ENCODE measurements at regions of chr1 and their contacts with region 1.

Region 1: GRCh38 chr1:174953285-174954072 is 46.3 kb upstream of the CACYBP start:
- DNase-seq: peak; percentile 69 to 76
- H3K4me3 ChIP-seq: peak overlapping the region; percentile 13; the same call in 1 of the 2 replicates
- H3K4me3 Mint-ChIP-seq: peak overlapping the region; percentile 41
- H3K27ac Mint-ChIP-seq: peak overlapping the region; percentile 0
- H3K4me1 ChIP-seq: peaks cover 26% of the 10 kb centered on the region
- H3K4me1 Mint-ChIP-seq: peaks cover 15% of the 10 kb centered on the region
- H3K27me3 ChIP-seq: no peaks in the 10 kb centered on the region
- H3K27me3 Mint-ChIP-seq: no peaks in the 10 kb centered on the region
- CTCF ChIP-seq: no peak

Region 2: GRCh38 chr1:174815036-174815435 is 138.4 kb before region 1 on chr1:
- CTCF ChIA-PET with region 1: no interaction called
- POLR2A ChIA-PET with region 1: no interaction called
- intact Hi-C with region 1: no loop called
- DNase-seq: no peak
- H3K4me3 ChIP-seq: no peak overlapping the region
- H3K4me3 Mint-ChIP-seq: no peak overlapping the region
- H3K27ac Mint-ChIP-seq: no peak overlapping the region
- H3K4me1 ChIP-seq: peaks cover 10% of the 10 kb centered on the region; the same call in 1 of the 2 replicates
- H3K4me1 Mint-ChIP-seq: peaks cover 11% of the 10 kb centered on the region
- H3K27me3 ChIP-seq: no peaks in the 10 kb centered on the region
- H3K27me3 Mint-ChIP-seq: no peaks in the 10 kb centered on the region
- CTCF ChIP-seq: no peak

Region 3: DNA sequence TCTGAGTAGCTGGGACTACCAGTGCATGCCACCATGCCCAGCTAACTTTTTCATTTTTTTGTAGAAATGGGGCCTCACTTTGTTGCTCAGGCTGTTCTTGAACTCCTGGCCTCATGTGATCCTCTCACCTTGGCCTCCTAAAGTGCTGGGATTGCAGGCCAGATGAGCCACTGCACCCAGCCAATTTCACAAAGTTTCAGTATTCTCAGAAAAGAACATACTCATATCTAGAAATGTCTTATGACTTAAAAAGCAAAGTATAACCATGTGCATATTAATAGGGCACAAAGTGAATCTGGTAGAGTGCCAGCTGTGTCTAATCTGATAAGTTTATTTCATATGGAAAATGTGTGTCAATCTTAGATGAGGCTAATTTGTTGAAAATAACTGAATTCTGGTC is 41.2 kb before region 1 on chr1:
- CTCF ChIA-PET with region 1: no interaction called
- POLR2A ChIA-PET with region 1: no interaction called
- intact Hi-C with region 1: loop called (anchors 5 kb)
- DNase-seq: no peak
- H3K4me3 ChIP-seq: no peak overlapping the region
- H3K4me3 Mint-ChIP-seq: no peak overlapping the region
- H3K27ac Mint-ChIP-seq: no peak overlapping the region
- H3K4me1 ChIP-seq: no peaks in the 10 kb centered on the region
- H3K4me1 Mint-ChIP-seq: no peaks in the 10 kb centered on the region
- H3K27me3 ChIP-seq: no peaks in the 10 kb centered on the region
- H3K27me3 Mint-ChIP-seq: peaks cover 4% of the 10 kb centered on the region
- CTCF ChIP-seq: no peak

Region 4: GRCh38 chr1:174942547-174943255 is 10.8 kb before region 1 on chr1:
- CTCF ChIA-PET with region 1: no interaction called
- POLR2A ChIA-PET with region 1: no interaction called
- intact Hi-C with region 1: loop called (anchors 1 kb)
- DNase-seq: peak; percentile 39 to 41
- H3K4me3 ChIP-seq: no peak overlapping the region
- H3K4me3 Mint-ChIP-seq: no peak overlapping the region
- H3K27ac Mint-ChIP-seq: no peak overlapping the region
- H3K4me1 ChIP-seq: peaks cover 8% of the 10 kb centered on the region; the same call in 1 of the 2 replicates
- H3K4me1 Mint-ChIP-seq: peaks cover 18% of the 10 kb centered on the region
- H3K27me3 ChIP-seq: no peaks in the 10 kb centered on the region
- H3K27me3 Mint-ChIP-seq: no peaks in the 10 kb centered on the region
- CTCF ChIP-seq: no peak